Heart right ventricle (tissue), 16 donors: ENCODE measurements at regions of chr6 and their contacts with region 1.

Region 1: DNA sequence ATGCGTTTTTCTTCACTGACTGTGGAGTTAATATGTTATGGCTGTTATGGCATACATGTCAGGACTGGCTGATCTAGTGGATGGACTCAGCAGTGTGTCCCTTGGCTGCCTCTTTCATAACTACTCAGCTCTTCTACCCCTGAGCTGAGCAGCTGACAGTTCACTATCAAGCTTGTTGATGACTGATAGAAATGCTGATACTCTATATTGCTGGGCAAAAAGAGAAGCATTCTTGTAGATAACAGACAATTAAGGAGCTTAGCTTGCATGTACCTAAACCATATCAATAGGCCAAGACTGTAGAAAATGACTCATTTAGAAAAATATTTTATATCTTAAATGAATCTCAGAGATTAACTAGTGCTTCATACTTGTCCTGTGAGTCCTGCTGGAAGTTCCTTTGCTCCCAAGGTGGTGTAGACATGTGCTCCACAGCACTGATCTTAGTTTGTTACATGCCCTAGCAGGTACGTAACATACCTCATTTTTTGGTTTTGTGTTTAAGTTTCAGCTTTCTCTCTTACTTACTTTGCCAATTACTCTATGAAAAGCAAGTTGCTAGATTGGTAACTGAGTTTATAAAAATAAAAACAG is 236.9 kb downstream of the GMDS start:
- DNase-seq: no peak
- ATAC-seq: no peak
- H3K4me3 ChIP-seq: no peak overlapping the region
- H3K27ac ChIP-seq: no peak overlapping the region
- H3K4me1 ChIP-seq: no peaks in the 10 kb centered on the region
- H3K27me3 ChIP-seq: no peaks in the 10 kb centered on the region
- CTCF ChIP-seq: no peak

Region 2: GRCh38 chr6:2047855-2048254 is 39.4 kb after region 1 on chr6:
- intact Hi-C with region 1: loop called in 1 of 10 experiments (anchors 1 kb)
- DNase-seq: no peak
- ATAC-seq: no peak
- H3K4me3 ChIP-seq: no peak overlapping the region
- H3K27ac ChIP-seq: no peak overlapping the region
- H3K4me1 ChIP-seq: no peaks in the 10 kb centered on the region
- H3K27me3 ChIP-seq: no peaks in the 10 kb centered on the region
- CTCF ChIP-seq: no peak